ENCODE measurements at regions of chr1 and their contacts with region 1.

Region 1: DNA sequence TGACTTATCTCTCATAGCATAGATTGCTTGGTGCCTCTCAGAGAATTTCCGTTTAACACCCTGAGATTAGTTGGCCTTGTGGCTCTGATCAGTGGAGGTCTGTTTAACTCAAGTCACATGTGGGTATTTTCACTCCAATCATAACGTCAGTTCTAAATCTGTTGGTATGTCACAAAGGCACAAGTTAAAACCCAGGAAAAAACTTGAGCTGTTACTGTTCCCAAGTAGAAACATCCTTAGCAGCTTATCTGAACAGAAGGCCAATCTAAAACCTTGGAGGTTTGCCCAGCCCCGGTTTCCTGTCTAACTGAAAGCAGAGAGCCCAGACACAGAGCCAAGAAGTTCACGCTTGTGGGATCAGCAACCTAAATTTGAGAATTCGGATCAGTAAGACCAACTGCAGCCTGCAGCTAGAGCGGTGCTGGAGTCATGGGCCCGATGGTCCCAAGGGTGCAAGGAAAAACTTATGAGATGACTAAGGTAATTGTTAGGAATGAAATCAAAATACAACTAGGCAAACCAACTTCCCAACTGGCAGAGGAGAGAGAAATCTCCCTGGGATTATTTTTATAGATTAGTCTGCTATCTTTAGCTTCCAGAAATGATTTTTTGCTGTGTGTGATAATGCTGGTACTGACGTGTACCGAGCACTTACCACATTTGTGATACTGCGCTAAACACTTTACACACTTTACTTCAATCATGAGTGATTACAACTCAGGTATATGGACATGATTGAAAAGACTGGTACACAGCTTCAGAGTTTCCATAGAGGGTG is 90.2 kb upstream of the C1orf21 start:
- DNase-seq: peak; percentile 91

Region 2: DNA sequence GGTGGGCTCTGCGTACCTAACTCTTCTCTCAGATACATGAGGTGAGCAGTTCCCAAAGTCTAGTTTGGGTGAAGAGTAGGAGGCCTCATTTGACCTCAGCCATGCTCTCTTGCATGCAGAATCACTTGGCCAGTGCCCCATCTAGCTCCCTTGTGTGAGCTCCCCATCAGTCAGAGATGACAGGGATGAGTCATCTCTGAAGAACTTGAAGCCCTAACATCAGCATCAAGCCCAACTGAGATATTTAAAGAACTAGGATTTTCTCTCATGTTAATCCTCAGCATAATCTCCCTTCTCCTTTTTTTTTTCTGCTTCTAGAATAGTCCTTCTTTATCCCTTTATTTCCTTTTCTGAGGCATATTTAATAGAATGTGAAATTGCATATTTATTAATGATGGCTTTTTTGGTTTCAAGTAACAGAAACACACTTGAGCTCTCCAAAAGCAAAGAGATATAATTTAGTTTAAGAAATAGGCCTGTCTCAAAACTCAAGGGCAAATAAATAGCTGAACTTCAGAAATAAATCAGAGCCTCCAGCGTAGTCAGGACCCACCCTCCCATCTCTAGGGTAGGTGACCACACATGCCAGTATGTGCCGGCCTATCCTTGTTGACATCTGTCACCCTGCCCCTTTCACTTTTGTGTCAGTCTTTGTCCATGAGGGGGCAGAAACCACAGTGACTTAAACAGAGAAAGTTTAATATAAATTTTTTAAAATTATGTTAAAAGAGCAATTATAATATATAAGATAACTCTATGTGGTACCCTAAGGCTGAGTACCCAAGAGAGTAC is 132.8 kb before region 1 on chr1:
- intact Hi-C with region 1: loop called (anchors 10 kb)
- DNase-seq: no peak

Region 3: GRCh38 chr1:184255560-184255959 is 41.1 kb before region 1 on chr1:
- intact Hi-C with region 1: loop called (anchors 5 kb)
- DNase-seq: no peak

Region 4: DNA sequence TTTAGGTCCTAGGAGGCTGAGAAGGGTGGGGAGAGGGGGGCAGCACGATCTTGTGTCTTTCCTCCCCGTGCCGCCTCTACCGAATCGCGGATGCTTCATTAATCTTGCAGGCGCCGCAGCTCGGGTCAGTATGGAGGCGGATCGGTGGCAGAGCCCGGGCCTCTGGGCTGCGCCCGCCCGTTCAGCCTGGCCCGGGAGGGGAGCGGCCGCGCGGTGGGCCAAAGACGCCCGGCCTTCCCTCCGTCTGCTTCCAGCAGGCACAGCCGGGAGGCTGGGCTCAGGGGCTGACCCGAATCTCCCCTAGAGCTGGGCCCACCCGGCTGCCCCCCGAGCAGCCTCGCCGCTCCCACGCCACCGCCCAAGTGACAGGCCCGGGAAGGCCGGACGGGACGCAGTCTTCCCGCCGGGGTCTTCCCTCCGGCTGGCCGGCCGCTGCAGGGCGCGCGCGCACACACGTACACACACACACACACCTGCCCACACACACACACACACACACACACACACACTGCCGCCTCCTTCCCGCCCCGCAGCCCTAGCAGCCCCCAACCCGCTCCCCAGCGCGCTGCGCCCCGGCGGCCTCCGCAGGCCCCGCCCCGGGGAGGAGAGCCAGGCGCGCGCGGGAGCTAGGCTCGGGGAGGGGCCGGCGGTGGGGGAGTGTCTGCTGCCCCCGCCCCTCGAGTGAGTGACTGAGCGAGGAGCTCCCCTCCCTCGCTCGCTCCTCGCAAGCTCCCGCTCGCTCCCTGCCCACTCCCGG is 89.8 kb after region 1 on chr1 and contains the start of gene C1orf21:
- intact Hi-C with region 1: loop called (anchors 2 kb)
- DNase-seq: peak; percentile 91
- total RNA-seq, gene C1orf21: 93.6 TPM

Region 5: DNA sequence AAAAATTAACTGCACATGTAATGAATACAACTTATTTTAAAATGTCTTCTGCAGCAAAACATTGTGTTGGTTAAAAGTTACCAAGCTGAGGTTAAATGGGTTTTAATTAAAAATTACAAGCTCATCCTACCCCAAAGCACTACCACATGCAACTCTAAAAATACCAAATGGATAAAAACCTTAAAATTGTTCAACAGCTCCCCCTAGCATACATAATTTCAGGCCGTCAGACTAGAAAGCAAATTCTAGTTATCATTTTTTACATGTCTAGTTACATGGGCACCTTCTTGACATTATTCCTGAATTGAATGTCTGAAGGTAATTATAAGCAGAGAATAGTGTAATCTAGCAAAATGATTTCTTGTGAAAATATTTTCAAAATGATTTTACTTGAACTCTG is 266.7 kb after region 1 on chr1:
- intact Hi-C with region 1: loop called (anchors 5 kb)
- DNase-seq: no peak

Region 6: DNA sequence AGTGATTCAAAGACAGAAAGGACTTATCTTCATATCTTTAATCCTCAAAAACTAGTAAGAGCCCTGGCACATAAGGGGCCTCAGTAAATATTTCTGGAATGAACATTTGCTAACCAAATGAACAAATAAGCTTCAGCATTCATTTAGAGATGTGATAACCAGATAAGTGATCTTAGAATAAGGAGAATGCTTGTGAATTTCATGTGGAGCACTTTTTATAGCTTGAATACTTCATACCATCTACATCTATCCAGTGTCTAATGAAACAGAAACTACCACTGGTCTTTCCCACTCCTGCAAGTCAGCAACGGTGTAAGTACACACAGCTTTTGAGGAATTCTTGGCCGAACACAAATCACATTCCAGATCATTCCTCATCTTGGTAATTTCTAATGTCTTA is 419.5 kb after region 1 on chr1:
- intact Hi-C with region 1: no loop called
- DNase-seq: no peak